ENCODE measurements at regions of chr4 and their contacts with region 1.

Region 1: GRCh38 chr4:108620101-108620932 is at the start of gene RPL34:
- DNase-seq: peak; percentile 95
- ATAC-seq: peak; percentile 100
- H3K4me3 ChIP-seq: peak within 1 kb of the TSS; percentile 100
- H3K27ac ChIP-seq: peak within 1 kb of the TSS; percentile 43
- H3K4me1 ChIP-seq: peaks cover 17% of the 10 kb centered on the region
- H3K27me3 ChIP-seq: no peaks in the 10 kb centered on the region
- CTCF ChIP-seq: no peak
- total RNA-seq, gene RPL34: 478 and 695 TPM in 2 replicates

Region 2: GRCh38 chr4:108644237-108644636 is 23.9 kb after region 1 on chr4:
- CTCF ChIA-PET with region 1: no interaction called
- POLR2A ChIA-PET with region 1: interaction called, 15 read pairs
- intact Hi-C with region 1: no loop called
- DNase-seq: peak; percentile 47
- ATAC-seq: peak; percentile 59
- H3K4me3 ChIP-seq: no peak overlapping the region
- H3K27ac ChIP-seq: no peak overlapping the region
- H3K4me1 ChIP-seq: peaks cover 5% of the 10 kb centered on the region
- H3K27me3 ChIP-seq: no peaks in the 10 kb centered on the region
- CTCF ChIP-seq: no peak

Region 3: DNA sequence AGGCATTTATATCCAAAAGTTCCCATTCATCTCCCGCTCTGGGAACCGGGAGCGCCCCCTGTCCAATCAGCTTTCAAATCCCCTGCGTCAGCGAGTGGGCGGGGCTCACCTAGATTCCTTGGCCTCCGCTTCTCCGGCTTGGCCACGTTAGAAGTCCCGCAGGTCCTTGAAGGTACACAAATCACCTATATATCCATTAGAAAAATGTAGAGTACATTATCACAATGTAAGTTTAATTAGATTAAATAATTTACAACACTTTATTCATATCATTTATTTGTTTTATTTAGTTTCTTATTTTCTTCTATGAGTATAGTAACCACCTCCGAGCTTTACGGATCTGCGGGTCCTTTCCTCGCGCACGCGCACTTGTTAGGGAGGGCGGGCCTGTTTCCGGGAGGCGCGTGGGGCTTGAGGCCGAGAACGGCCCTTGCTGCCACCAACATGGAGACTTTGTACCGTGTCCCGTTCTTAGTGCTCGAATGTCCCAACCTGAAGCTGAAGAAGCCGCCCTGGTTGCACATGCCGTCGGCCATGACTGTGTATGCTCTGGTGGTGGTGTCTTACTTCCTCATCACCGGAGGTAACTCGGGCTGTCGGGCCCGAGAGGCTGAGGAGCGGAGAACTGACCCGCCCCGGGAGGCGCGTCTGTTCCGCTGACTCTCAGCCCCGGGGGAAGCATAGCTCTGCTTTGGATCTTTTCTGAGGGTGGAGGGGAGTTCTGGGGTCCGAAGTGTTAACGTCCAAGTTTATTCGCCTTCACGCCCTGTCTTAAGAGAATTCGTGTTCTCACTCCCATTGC is 30.1 kb after region 1 on chr4 and contains the start of gene OSTC:
- CTCF ChIA-PET with region 1: no interaction called
- POLR2A ChIA-PET with region 1: no interaction called
- intact Hi-C with region 1: loop called (anchors 2 kb)
- DNase-seq: peak; percentile 89
- ATAC-seq: peak; percentile 80
- H3K4me3 ChIP-seq: peak within 1 kb of the TSS; percentile 95
- H3K27ac ChIP-seq: peak within 1 kb of the TSS; percentile 46
- H3K4me1 ChIP-seq: peaks cover 14% of the 10 kb centered on the region
- H3K27me3 ChIP-seq: no peaks in the 10 kb centered on the region
- CTCF ChIP-seq: no peak
- total RNA-seq, gene OSTC: 47.2 and 49.1 TPM in 2 replicates

Measured in PC-3 (cell line).